Heart left ventricle (tissue), 16 donors: ENCODE measurements at regions of chr3 and their contacts with region 1.

Region 1: GRCh38 chr3:99659032-99659431 is 20.6 kb downstream of the COL8A1 start:
- DNase-seq: peak in 3 of 5 donors; percentile 25 to 67 (median 50)
- ATAC-seq: peak; percentile 16 to 96 (median 73)
- H3K4me3 ChIP-seq: no peak overlapping the region
- H3K27ac ChIP-seq: peak overlapping the region in 11 of 12 donors; percentile 14 to 76 (median 38)
- H3K4me1 ChIP-seq: peaks cover 0 to 28% (median 4%) of the 10 kb centered on the region in 12 donors
- H3K27me3 ChIP-seq: no peaks in the 10 kb centered on the region
- CTCF ChIP-seq: no peak
- POLR2A ChIP-seq: no peak

Region 2: GRCh38 chr3:99544786-99545281 is 114.2 kb before region 1 on chr3:
- intact Hi-C with region 1: loop called in 1 of 10 experiments (anchors 10 kb)
- DNase-seq: peak in 4 of 5 donors; percentile 24 to 61 (median 42)
- ATAC-seq: peak; percentile 46 to 73 (median 64)
- H3K4me3 ChIP-seq: no peak overlapping the region
- H3K27ac ChIP-seq: peak overlapping the region; percentile 41 to 80 (median 64)
- H3K4me1 ChIP-seq: peaks cover 0 to 61% (median 32%) of the 10 kb centered on the region in 12 donors
- H3K27me3 ChIP-seq: no peaks in the 10 kb centered on the region
- CTCF ChIP-seq: no peak
- POLR2A ChIP-seq: no peak